ENCODE measurements at regions of chr1 and their contacts with region 1.

Region 1: GRCh38 chr1:15598436-15598835 is 13.6 kb upstream of the AGMAT start:
- DNase-seq: no peak

Region 2: DNA sequence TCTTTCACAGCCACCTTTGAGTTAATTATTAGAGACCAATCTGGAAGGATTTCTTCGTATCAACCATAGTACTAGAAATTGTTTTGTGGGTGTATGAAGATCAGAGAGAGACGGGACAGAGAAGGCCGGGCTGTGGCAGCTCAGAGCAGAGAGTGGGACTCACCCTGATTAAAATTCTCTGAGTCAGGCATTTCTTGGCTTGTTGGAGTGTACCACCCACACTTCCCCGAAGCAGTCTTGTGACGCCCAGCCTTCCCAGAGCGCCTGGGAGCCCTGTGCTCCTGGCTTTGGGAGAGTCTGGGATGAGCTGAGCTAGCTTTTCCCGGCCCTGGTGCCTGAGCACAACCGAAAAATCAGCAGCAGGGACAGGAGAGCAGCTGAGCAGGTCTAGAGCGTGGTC is 105.1 kb after region 1 on chr1:
- intact Hi-C with region 1: loop called in 1 of 2 experiments (anchors 10 kb)
- DNase-seq: peak; percentile 96

Region 3: GRCh38 chr1:15736038-15736889 is 137.8 kb after region 1 on chr1 and contains the start of gene SLC25A34:
- intact Hi-C with region 1: loop called in 1 of 2 experiments (anchors 10 kb)
- DNase-seq: no peak
- total RNA-seq, gene SLC25A34: 1.2 to 1.6 TPM

Measured in posterior vena cava (tissue), 2 donors.